ENCODE measurements at regions of chr6 and their contacts with region 1.

Region 1: GRCh38 chr6:135094403-135094848 is 39.8 kb upstream of the HBS1L start:
- DNase-seq: peak in 11 of 14 experiments; percentile 12 to 79 (median 42)
- ATAC-seq: peak; percentile 91
- H3K4me3 ChIP-seq: no peak overlapping the region
- H3K4me3 Mint-ChIP-seq: peak overlapping the region; percentile 58
- H3K27ac ChIP-seq: peak overlapping the region; percentile 46 to 60
- H3K27ac Mint-ChIP-seq: peak overlapping the region; percentile 90
- H3K4me1 ChIP-seq: peaks cover 22% of the 10 kb centered on the region
- H3K4me1 Mint-ChIP-seq: peaks cover 65% of the 10 kb centered on the region
- H3K27me3 ChIP-seq: no peaks in the 10 kb centered on the region
- H3K27me3 Mint-ChIP-seq: no peaks in the 10 kb centered on the region
- CTCF ChIP-seq: no peak

Region 2: GRCh38 chr6:135105710-135106109 is 11.3 kb after region 1 on chr6:
- CTCF ChIA-PET with region 1: interaction called, 6 read pairs
- POLR2A ChIA-PET with region 1: interaction called, 42 read pairs
- intact Hi-C with region 1: no loop called
- DNase-seq: no peak
- ATAC-seq: no peak
- H3K4me3 ChIP-seq: no peak overlapping the region
- H3K4me3 Mint-ChIP-seq: no peak overlapping the region
- H3K27ac ChIP-seq: no peak overlapping the region
- H3K27ac Mint-ChIP-seq: peak overlapping the region; percentile 89
- H3K4me1 ChIP-seq: peaks cover 24% of the 10 kb centered on the region
- H3K4me1 Mint-ChIP-seq: peaks cover 66% of the 10 kb centered on the region
- H3K27me3 ChIP-seq: no peaks in the 10 kb centered on the region
- H3K27me3 Mint-ChIP-seq: no peaks in the 10 kb centered on the region
- CTCF ChIP-seq: no peak